ENCODE measurements at regions of chr4 and their contacts with region 1.

Region 1: GRCh38 chr4:155953151-155954114 is at the start of gene CTSO:
- DNase-seq: peak; percentile 68
- H3K4me3 Mint-ChIP-seq: peak within 1 kb of the TSS; percentile 93
- H3K27ac Mint-ChIP-seq: peak within 1 kb of the TSS; percentile 97
- H3K4me1 Mint-ChIP-seq: peaks cover 2% of the 10 kb centered on the region
- H3K27me3 Mint-ChIP-seq: peaks cover 4% of the 10 kb centered on the region
- total RNA-seq, gene CTSO: 0.87 and 0.94 TPM in 2 replicates

Region 2: GRCh38 chr4:155442267-155443105 is 510.9 kb before region 1 on chr4:
- intact Hi-C with region 1: loop called (anchors 1 kb)
- DNase-seq: peak; percentile 19
- H3K4me3 Mint-ChIP-seq: no peak overlapping the region
- H3K27ac Mint-ChIP-seq: no peak overlapping the region
- H3K4me1 Mint-ChIP-seq: peaks cover 7% of the 10 kb centered on the region
- H3K27me3 Mint-ChIP-seq: peaks cover 25% of the 10 kb centered on the region

Region 3: DNA sequence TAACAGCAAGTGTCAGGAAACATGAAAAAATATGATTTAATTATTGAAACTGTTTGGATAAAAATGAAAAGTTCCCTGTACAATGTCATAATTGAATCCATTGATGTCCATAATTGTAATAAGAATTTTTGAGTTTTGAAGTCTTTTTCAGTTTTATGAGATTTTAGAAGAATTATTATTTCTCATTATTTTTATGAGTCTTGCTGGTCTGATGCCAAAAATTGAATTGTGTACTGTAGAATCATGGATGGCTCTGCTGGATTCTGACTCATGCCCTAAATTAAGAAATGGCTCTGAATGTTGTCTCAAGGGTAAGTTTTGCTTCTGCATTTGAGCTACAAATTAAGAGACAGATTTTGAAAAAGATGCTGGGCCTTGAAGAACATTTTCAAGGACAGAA is 443.9 kb before region 1 on chr4:
- intact Hi-C with region 1: loop called (anchors 10 kb)
- DNase-seq: no peak
- H3K4me3 Mint-ChIP-seq: no peak overlapping the region
- H3K27ac Mint-ChIP-seq: no peak overlapping the region
- H3K4me1 Mint-ChIP-seq: peaks cover 7% of the 10 kb centered on the region
- H3K27me3 Mint-ChIP-seq: peaks cover 18% of the 10 kb centered on the region

Region 4: GRCh38 chr4:155809835-155810234 is 143.6 kb before region 1 on chr4:
- intact Hi-C with region 1: loop called (anchors 1 kb)
- DNase-seq: no peak
- H3K4me3 Mint-ChIP-seq: no peak overlapping the region
- H3K27ac Mint-ChIP-seq: no peak overlapping the region
- H3K4me1 Mint-ChIP-seq: peaks cover 2% of the 10 kb centered on the region
- H3K27me3 Mint-ChIP-seq: no peaks in the 10 kb centered on the region

Region 5: DNA sequence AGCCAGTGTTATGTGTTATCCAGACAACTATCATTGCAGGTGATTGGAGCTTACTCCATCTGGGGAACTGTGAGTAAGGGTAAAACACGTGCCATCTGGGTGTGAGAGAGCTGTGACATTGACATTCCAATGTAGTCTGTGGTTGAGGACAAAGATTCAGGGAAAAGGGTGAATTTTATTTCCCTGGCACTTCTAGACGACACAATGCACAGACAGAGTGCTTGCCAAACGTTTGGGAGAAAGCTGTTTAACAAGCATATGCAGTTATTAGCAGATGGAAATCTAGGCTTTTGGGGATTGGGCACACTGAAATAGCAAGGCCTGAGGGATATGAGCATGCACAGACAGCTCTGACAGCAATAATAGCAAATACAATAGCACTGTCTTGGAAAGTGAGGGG is 21.6 kb after region 1 on chr4:
- intact Hi-C with region 1: no loop called
- DNase-seq: no peak
- H3K4me3 Mint-ChIP-seq: no peak overlapping the region
- H3K27ac Mint-ChIP-seq: no peak overlapping the region
- H3K4me1 Mint-ChIP-seq: no peaks in the 10 kb centered on the region
- H3K27me3 Mint-ChIP-seq: no peaks in the 10 kb centered on the region

Region 6: GRCh38 chr4:155995069-155995468 is 41.6 kb after region 1 on chr4:
- intact Hi-C with region 1: no loop called
- DNase-seq: no peak
- H3K4me3 Mint-ChIP-seq: no peak overlapping the region
- H3K27ac Mint-ChIP-seq: no peak overlapping the region
- H3K4me1 Mint-ChIP-seq: no peaks in the 10 kb centered on the region
- H3K27me3 Mint-ChIP-seq: no peaks in the 10 kb centered on the region

Measured in activated T-helper 2 cell treated with anti-CD3 and anti-CD28 coated beads, Interferon-gamma antibody, Interleukin-2, Interleukin-4, amounts not matched to agents 10 μg/mL and 5 μg/mL and 100 μg/mL, durations not matched to agents 14 hours and 24 hours and 36 hours (primary cell).